ENCODE measurements at regions of chr4 and their contacts with region 1.

Region 1: GRCh38 chr4:10116580-10117358 is at the start of gene WDR1:
- DNase-seq: peak; percentile 72 to 89
- ATAC-seq: peak; percentile 94 to 96
- H3K4me3 ChIP-seq: peak within 1 kb of the TSS; percentile 60
- H3K27ac ChIP-seq: peak within 1 kb of the TSS; percentile 92 to 100
- H3K4me1 ChIP-seq: peaks cover 20% of the 10 kb centered on the region
- CTCF ChIP-seq: no peak
- EP300 ChIP-seq: no peak
- POLR2A ChIP-seq: peak; percentile 83
- RAD21 ChIP-seq: no peak
- polyA plus RNA-seq, gene WDR1: 207 and 326 TPM in 2 replicates

Region 2: GRCh38 chr4:10033191-10033881 is 83.4 kb before region 1 on chr4:
- CTCF ChIA-PET with region 1: no interaction called
- POLR2A ChIA-PET with region 1: interaction called, 11 read pairs
- DNase-seq: no peak
- ATAC-seq: peak; percentile 68 to 71; a peak in 5 of 6 replicates
- H3K4me3 ChIP-seq: no peak overlapping the region
- H3K27ac ChIP-seq: peak overlapping the region; percentile 67 to 81
- H3K4me1 ChIP-seq: peaks cover 37% of the 10 kb centered on the region
- CTCF ChIP-seq: no peak
- EP300 ChIP-seq: no peak
- POLR2A ChIP-seq: no peak
- RAD21 ChIP-seq: no peak

Region 3: DNA sequence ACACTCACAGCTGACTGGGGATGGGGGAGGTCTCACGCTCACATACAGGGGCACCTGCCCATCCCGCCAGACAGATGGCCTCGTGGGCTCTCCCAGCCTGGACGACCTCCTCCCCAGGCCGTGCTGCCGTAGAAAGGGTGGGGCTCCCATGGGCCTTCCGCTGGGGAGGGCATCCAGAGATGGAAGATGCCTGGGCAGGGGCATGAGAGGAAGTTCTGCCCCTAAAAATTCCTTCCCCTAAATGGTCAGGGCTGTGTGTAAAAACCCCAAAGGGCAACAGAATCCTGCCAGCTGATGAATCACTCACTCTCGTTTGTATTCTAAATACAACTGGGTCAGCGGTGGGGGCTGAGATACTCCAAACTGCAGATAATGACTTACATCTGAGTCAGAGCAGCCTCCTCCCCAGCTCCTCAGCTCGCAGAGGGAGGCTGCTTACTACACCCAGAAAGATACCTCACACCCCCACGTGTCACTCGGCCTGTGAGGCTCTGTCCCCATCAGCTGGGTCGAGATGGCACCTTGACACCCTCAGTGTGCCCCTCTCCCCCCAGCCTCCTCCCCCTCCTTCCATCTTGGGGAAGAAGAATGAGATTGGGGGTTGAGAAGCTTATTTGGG is 10.2 kb before region 1 on chr4:
- CTCF ChIA-PET with region 1: interaction called, 3 read pairs
- POLR2A ChIA-PET with region 1: interaction called, 29 read pairs
- DNase-seq: peak; percentile 72 to 86
- ATAC-seq: peak; percentile 86 to 94
- H3K4me3 ChIP-seq: 0 out of 3 replicates have a peak overlapping the region, but pooled peaks have one; percentile 8
- H3K27ac ChIP-seq: peak overlapping the region in 1 of 2 experiments; percentile 76; a peak in 3 of 6 replicates
- H3K4me1 ChIP-seq: peaks cover 50% of the 10 kb centered on the region
- CTCF ChIP-seq: no peak
- EP300 ChIP-seq: no peak
- POLR2A ChIP-seq: no peak
- RAD21 ChIP-seq: no peak

Measured in A549 (cell line).